Activated CD8-positive, alpha-beta T cell treated with anti-CD3 and anti-CD28 coated beads for 36 hours (primary cell): ENCODE measurements at regions of chr9 and their contacts with region 1.

Region 1: DNA sequence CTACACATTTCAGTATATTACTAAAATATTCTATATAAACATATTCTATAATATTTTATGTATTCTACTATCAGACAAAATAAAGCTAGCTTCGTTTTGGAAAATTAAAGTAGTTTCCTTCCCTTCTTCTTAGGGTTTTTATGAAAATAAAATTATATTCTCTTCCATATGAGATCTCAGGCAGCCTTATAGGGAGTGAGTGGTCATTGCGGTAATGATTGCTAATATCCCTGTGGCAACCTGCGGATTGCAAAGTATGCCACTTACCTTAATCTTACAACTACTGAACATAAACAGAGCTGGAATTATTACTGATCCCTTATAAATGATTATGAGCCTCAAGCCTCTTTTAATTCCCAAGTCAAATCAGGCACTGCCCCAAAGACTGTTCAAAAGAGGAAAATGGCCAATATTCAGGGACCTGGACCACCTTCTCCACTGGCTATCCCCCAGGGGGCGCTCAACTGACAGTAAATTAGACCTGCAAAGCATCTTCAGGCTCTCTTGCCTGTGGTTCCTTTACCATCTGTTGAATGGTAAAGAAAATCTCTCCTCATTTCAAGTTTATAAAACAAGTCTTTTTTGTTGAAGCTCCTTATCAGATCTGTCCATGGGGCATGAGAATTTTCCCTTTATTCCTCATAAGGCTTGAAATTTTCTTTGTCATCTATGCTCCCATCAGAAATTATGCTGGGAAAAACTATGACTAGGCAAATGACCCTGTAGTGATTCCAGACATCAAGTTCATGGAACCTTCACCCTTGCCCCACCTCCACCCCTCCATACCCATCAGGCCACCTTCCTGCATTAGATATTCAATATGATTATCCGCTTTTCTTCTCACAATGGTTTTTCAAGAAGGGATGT is 163.9 kb downstream of the CEMIP2 start:
- DNase-seq: peak; percentile 85
- ATAC-seq: peak; percentile 79
- H3K4me3 Mint-ChIP-seq: no peak overlapping the region
- H3K27ac Mint-ChIP-seq: no peak overlapping the region
- H3K4me1 Mint-ChIP-seq: no peaks in the 10 kb centered on the region
- H3K27me3 Mint-ChIP-seq: no peaks in the 10 kb centered on the region
- CTCF ChIP-seq: peak; percentile 89

Region 2: DNA sequence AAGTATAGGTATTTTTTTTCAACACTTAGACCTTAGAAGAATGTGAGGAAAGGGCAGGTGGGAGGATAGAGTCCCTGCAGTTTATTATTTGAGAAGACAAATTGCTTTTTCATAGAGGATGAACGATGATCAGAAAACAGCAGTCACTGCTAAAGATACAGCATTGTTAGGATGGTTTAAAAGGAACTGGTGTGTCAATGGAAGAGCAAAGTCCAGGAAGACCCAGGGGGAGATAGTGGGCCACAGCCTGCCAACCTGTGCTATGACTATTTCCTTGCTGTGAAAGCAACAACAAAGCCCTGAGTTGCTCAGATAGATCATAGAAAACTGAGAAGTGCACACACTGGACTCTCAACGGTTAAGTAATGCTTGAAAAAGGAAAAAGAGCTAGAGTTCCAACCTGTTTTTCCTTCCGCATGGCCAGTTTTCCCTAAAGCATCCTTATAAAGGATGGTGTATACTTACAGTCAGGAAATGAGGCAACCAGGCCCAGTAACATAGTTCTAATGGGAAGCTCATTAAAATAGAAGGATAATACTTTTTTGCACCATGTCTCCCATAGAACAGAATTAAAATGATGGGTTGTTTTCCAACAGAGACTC is 10.1 kb after region 1 on chr9:
- CTCF ChIA-PET with region 1: interaction called, 23 read pairs
- POLR2A ChIA-PET with region 1: no interaction called
- intact Hi-C with region 1: no loop called
- DNase-seq: no peak
- ATAC-seq: no peak
- H3K4me3 Mint-ChIP-seq: no peak overlapping the region
- H3K27ac Mint-ChIP-seq: no peak overlapping the region
- H3K4me1 Mint-ChIP-seq: no peaks in the 10 kb centered on the region
- H3K27me3 Mint-ChIP-seq: no peaks in the 10 kb centered on the region
- CTCF ChIP-seq: no peak

Region 3: GRCh38 chr9:71716138-71716909 is 111.9 kb after region 1 on chr9:
- CTCF ChIA-PET with region 1: interaction called, 16 read pairs
- POLR2A ChIA-PET with region 1: no interaction called
- intact Hi-C with region 1: no loop called
- DNase-seq: no peak
- ATAC-seq: no peak
- H3K4me3 Mint-ChIP-seq: no peak overlapping the region
- H3K27ac Mint-ChIP-seq: no peak overlapping the region
- H3K4me1 Mint-ChIP-seq: peaks cover 4% of the 10 kb centered on the region
- H3K27me3 Mint-ChIP-seq: no peaks in the 10 kb centered on the region
- CTCF ChIP-seq: peak; percentile 63

Region 4: DNA sequence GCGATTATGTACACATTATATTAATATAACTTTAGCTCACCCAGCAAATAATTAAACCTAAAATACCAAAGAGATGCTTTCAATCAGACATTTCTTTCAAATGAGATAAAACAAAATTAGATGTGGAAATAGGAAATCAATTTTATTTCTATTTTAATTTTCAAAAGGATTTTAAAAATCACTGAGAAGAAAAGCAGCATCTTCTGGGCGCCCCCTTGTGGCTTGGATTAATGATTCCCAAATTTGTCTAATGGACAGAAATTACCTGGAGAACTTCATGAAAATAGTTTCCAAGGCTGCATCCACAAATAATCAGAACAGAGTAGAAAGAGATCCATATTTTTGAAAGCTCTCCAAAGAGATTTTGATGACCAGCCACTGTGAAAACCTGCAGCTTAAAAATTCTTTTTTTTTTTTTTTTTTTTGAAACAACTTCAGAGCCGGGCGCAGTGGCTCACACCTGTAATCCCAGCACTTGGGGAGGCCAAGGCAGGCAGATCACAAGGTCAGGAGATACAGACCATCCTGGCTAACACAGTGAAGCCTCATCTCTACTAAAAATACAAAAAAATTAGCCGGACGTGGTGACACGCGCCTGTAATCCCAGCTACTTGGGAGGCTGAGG is 214.8 kb after region 1 on chr9:
- CTCF ChIA-PET with region 1: interaction called, 12 read pairs
- POLR2A ChIA-PET with region 1: no interaction called
- intact Hi-C with region 1: loop called (anchors 2 kb)
- DNase-seq: peak; percentile 61
- ATAC-seq: no peak
- H3K4me3 Mint-ChIP-seq: no peak overlapping the region
- H3K27ac Mint-ChIP-seq: no peak overlapping the region
- H3K4me1 Mint-ChIP-seq: peaks cover 16% of the 10 kb centered on the region
- H3K27me3 Mint-ChIP-seq: no peaks in the 10 kb centered on the region
- CTCF ChIP-seq: peak; percentile 91

Region 5: DNA sequence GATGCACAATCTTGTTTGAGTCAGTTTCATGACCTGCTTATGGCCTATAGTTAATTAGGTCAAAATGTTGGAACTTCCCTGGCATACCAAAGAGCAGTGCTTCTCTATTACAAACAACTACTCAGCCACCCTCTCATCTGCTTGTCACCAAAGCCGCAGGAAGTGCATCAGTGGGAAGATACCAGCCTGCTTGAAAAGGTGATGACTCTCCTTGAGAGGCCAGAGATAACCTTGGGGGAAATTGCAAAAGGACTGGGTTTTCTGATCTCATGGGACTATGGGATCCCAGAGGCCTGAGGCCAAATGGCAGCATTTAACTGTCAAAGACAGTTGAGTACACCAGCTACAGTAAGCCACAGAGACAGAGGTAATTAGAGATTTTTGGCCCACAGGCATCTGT is 386.0 kb after region 1 on chr9:
- CTCF ChIA-PET with region 1: no interaction called
- POLR2A ChIA-PET with region 1: no interaction called
- intact Hi-C with region 1: no loop called
- DNase-seq: no peak
- ATAC-seq: peak; percentile 27
- H3K4me3 Mint-ChIP-seq: no peak overlapping the region
- H3K27ac Mint-ChIP-seq: no peak overlapping the region
- H3K4me1 Mint-ChIP-seq: no peaks in the 10 kb centered on the region
- H3K27me3 Mint-ChIP-seq: no peaks in the 10 kb centered on the region
- CTCF ChIP-seq: no peak